Pancreas (tissue), 10 donors: ENCODE measurements at regions of chr17 and their contacts with region 1.

Region 1: DNA sequence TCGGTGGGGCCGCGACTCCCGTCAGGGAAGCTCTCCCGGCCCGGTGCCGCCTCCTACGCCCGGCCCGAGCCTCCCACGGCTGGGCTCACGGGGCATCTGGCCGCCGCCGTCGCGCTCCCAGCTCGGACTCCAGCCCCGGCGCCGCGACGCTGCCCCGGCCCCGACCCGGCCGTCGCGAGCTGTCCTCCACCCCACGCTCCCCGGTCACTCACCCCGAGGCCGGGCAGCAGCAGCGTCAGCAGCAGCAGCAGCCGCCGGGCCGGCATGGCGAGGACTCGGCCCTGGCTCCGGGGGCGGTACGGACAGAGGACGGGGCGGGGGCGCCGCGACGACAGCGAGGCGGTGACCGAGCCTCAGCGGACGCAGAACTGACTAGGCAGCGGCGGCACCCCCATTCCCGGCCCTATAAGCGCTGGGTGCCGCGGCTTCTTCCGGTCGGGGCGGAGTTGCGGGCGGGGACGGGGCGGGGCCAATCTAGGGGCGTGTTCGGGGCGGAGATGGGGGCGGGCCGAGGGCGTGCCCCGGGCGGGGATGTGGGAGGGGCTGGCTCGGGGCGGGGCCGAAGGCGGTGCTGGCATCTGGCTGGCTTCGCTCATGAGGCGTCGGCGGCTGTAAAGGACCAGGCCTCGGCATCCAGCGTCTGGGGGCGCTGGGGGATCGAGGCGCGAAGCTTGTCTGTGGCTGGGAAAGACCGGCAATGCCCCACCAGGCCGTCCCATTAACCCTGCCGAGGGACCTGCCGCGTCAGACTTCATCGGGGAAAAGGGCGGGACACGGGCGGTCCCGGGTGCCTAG is at the start of gene ERN1:
- DNase-seq: peak; percentile 91 to 99 (median 94)
- ATAC-seq: peak; percentile 88 to 95 (median 90)
- H3K4me3 ChIP-seq: peak within 1 kb of the TSS; percentile 31 to 94 (median 87)
- H3K27ac ChIP-seq: peak within 1 kb of the TSS; percentile 93 to 98 (median 95)
- H3K4me1 ChIP-seq: peaks cover 4 to 25% (median 6%) of the 10 kb centered on the region in 3 donors
- H3K27me3 ChIP-seq: no peaks in the 10 kb centered on the region
- CTCF ChIP-seq: no peak
- total RNA-seq, gene ERN1: 37.0 to 151 (median 42.9) TPM

Region 2: GRCh38 chr17:63919311-63919723 is 210.6 kb before region 1 on chr17:
- intact Hi-C with region 1: loop called in 2 of 3 experiments (anchors 10 kb)
- DNase-seq: peak in 4 of 6 donors; percentile 28 to 66 (median 44)
- ATAC-seq: peak; percentile 78 to 93 (median 92)
- H3K4me3 ChIP-seq: no peak overlapping the region
- H3K27ac ChIP-seq: no peak overlapping the region
- H3K4me1 ChIP-seq: no peaks in the 10 kb centered on the region
- H3K27me3 ChIP-seq: no peaks in the 10 kb centered on the region
- CTCF ChIP-seq: peak; percentile 87 to 96 (median 90)

Region 3: GRCh38 chr17:63988741-63989621 is 141.0 kb before region 1 on chr17:
- intact Hi-C with region 1: no loop called
- DNase-seq: peak in 1 of 6 donors; percentile 59
- ATAC-seq: no peak
- H3K4me3 ChIP-seq: no peak overlapping the region
- H3K27ac ChIP-seq: no peak overlapping the region
- H3K4me1 ChIP-seq: no peaks in the 10 kb centered on the region
- H3K27me3 ChIP-seq: no peaks in the 10 kb centered on the region
- CTCF ChIP-seq: no peak

Region 4: GRCh38 chr17:64025732-64026294 is 104.1 kb before region 1 on chr17:
- intact Hi-C with region 1: loop called in 2 of 3 experiments (anchors 10 kb)
- DNase-seq: peak; percentile 63 to 85 (median 74)
- ATAC-seq: peak; percentile 58 to 85 (median 79)
- H3K4me3 ChIP-seq: peak overlapping the region in 1 of 4 donors; percentile 2
- H3K27ac ChIP-seq: peak overlapping the region in 2 of 4 donors; percentile 54 to 58
- H3K4me1 ChIP-seq: peaks cover 11 to 24% (median 14%) of the 10 kb centered on the region in 3 donors
- H3K27me3 ChIP-seq: no peaks in the 10 kb centered on the region
- CTCF ChIP-seq: peak; percentile 77 to 93 (median 92)

Region 5: DNA sequence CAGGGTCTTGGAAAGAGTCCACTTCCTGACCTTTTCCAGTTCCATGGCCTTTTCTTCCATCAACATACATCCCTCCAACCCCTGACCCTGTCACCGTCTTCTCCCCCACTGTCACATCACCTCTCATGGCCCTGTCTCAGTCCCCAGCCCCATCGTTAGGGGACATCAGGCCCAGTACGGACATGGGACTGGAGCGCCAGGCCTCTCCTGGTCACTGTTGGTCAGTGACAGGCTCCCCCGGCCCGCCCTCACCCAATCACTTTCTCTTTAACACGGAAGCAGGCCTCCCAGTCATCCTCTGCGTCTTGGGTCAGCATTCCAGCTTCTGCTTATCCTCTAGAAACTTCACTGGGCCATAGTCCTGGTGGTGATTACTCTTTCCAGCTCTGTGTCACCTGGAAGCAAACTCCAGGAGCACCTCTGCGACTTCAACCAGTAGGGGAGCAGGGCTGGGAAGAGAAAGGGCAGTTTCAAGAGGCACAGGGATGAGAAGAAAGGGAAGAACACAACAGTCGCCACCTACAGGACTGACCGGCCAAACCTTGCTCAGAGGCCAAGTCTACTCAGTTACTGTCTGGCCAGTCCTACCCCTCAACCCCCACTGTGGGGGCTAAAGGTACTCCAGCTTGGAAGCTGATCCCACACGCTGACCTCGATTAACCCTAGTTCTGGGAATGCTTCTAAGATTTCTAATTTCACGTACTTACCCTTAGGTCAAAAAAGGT is 93.6 kb before region 1 on chr17:
- intact Hi-C with region 1: loop called in 1 of 3 experiments (anchors 10 kb)
- DNase-seq: peak in 1 of 6 donors; percentile 11
- ATAC-seq: no peak
- H3K4me3 ChIP-seq: no peak overlapping the region
- H3K27ac ChIP-seq: no peak overlapping the region
- H3K4me1 ChIP-seq: peaks cover 0 to 7% (median 0%) of the 10 kb centered on the region in 3 donors
- H3K27me3 ChIP-seq: no peaks in the 10 kb centered on the region
- CTCF ChIP-seq: no peak

Region 6: GRCh38 chr17:64063766-64064224 is 66.2 kb before region 1 on chr17:
- intact Hi-C with region 1: loop called in 2 of 3 experiments (anchors 5 to 10 kb)
- DNase-seq: peak; percentile 66 to 87 (median 82)
- ATAC-seq: peak; percentile 83 to 91 (median 88)
- H3K4me3 ChIP-seq: no peak overlapping the region
- H3K27ac ChIP-seq: peak overlapping the region in 3 of 4 donors; percentile 30 to 66 (median 40)
- H3K4me1 ChIP-seq: peaks cover 6 to 31% (median 16%) of the 10 kb centered on the region in 3 donors
- H3K27me3 ChIP-seq: no peaks in the 10 kb centered on the region
- CTCF ChIP-seq: peak; percentile 34 to 53 (median 50)

Region 7: DNA sequence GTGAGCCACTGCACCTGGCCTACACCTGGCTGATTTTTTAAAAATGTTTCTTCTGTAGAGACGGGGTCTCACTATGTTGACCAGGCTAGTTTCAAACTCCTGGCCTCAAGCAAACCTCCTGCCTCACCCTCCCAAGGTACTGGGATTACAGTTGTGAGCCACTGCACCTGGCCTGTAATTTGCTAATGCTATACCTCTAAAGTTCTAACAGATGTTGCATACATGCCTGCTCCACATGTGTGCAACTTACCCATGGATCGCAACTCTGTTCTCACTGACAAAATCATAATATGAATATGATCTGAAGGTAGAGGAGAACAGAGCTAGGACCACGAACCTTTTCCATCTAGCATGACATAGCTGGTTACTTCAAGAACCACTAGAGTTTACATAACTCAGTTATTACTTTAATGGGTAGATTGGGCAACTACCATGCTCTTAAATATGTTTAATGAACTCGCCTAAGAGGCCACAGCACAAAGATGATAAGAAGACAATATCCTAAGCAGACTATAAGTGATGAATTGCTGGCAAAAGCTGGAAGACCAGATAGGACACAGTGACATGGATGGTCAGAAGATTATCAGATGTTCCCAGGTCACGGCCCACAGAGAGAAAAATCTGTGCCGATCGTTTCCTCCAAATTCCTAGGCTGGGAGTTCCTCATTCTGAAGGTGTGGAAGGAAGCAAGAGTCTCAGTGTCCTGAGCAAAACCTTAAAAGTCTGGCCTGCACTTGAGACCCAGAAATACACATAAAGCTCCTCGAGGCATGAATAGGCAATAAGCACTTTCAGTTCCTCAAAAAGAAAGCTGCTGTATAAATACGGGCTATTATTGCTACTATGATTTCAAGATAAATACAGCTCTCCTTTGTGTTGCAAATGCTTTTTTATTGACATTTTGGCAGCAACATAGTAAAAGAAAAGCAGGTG is 55.9 kb before region 1 on chr17:
- intact Hi-C with region 1: loop called in 2 of 3 experiments (anchors 5 to 10 kb)
- DNase-seq: no peak
- ATAC-seq: peak in 3 of 4 donors; percentile 51 to 65 (median 58)
- H3K4me3 ChIP-seq: peak overlapping the region in 2 of 4 donors; percentile 5 to 10
- H3K27ac ChIP-seq: peak overlapping the region; percentile 35 to 88 (median 64)
- H3K4me1 ChIP-seq: peaks cover 27 to 41% (median 32%) of the 10 kb centered on the region in 3 donors
- H3K27me3 ChIP-seq: no peaks in the 10 kb centered on the region
- CTCF ChIP-seq: no peak